Gastrocnemius medialis (tissue), 4 donors: ENCODE measurements at regions of chr22 and their contacts with region 1.

Region 1: GRCh38 chr22:21031971-21032867 is at the start of gene SLC7A4:
- DNase-seq: peak in 1 of 2 donors; percentile 35
- ATAC-seq: peak; percentile 15
- H3K4me3 ChIP-seq: peak within 1 kb of the TSS in 3 of 4 donors; percentile 24 to 44 (median 28)
- H3K27ac ChIP-seq: no peak within 1 kb of the TSS
- H3K4me1 ChIP-seq: peaks cover 7 to 14% of the 10 kb centered on the region in 2 donors
- H3K27me3 ChIP-seq: peaks cover 17 to 20% (median 19%) of the 10 kb centered on the region in 3 donors
- CTCF ChIP-seq: no peak
- POLR2A ChIP-seq: peak in 1 of 2 donors; percentile 25
- total RNA-seq, gene SLC7A4: not detected

Region 2: DNA sequence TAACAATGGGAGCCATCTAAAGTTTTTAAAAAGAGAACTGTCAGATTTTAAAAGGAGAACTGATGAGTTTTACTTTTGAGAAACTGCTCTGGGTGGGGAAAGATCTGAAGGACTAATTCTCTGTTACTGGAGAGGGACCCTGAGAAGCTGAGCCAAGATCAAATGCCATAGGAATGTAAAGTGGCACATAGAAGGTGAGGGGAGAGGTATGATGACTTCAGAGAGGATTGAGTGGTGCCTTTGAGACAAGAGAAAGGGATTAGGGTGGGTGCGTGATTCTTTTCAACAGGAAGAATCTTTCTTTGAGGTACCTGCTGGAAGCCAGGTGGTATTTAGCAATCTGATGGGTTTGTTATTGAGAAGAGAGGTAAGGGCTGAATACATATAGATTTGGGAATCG is 106.0 kb before region 1 on chr22:
- in situ Hi-C with region 1: no loop called
- intact Hi-C with region 1: no loop called
- DNase-seq: no peak
- ATAC-seq: no peak
- H3K4me3 ChIP-seq: no peak overlapping the region
- H3K27ac ChIP-seq: no peak overlapping the region
- H3K4me1 ChIP-seq: peaks cover 17 to 29% of the 10 kb centered on the region in 2 donors
- H3K27me3 ChIP-seq: no peaks in the 10 kb centered on the region
- CTCF ChIP-seq: no peak
- POLR2A ChIP-seq: no peak

Region 3: GRCh38 chr22:20946080-20946986 is 85.9 kb before region 1 on chr22:
- in situ Hi-C with region 1: no loop called
- intact Hi-C with region 1: no loop called
- DNase-seq: no peak
- ATAC-seq: no peak
- H3K4me3 ChIP-seq: no peak overlapping the region
- H3K27ac ChIP-seq: peak overlapping the region in 2 of 4 donors; percentile 6 to 53
- H3K4me1 ChIP-seq: peaks cover 33 to 43% of the 10 kb centered on the region in 2 donors
- H3K27me3 ChIP-seq: no peaks in the 10 kb centered on the region
- CTCF ChIP-seq: no peak
- POLR2A ChIP-seq: no peak

Region 4: DNA sequence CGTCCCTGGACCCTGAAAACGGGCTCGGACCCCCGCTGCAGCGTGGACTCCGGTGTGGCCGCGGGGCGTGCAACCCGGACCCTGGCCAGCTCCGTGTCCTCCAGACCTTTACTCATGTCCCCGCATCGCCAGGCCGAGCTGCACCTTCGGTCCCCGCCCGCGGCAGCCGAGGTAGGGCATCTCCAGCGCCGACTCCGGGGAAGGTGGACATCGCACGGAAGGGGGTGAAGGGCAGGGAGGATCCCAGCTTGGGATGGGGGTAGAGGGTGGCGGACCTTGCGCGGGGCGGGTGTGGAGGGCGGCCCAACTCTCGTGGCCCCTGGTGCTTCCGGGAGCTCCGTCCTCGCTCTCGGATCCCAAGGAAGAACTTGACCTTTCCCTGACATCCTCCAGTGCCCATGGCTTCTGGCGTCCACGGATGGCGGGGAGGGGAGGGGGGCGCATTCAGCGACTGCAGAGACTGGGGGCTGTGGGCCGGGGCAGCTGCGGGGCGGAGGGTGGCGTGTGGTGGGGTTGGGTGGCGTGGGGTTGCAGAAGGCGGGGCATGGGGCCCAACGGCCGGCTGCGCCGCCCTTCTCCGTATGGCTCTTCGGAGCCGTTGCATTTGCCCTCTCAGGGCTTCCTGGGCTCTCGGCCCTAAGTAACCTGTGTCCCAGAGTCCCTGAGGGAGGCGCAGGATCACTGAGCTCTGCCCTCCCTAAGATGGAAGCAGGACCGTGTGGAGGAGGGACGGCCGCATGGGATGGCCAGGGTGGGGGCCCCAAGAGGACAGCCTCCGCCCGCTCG is 74.7 kb before region 1 on chr22:
- in situ Hi-C with region 1: no loop called
- intact Hi-C with region 1: no loop called
- DNase-seq: no peak
- ATAC-seq: peak in 1 of 2 donors; percentile 9
- H3K4me3 ChIP-seq: peak overlapping the region; percentile 58 to 77 (median 66)
- H3K27ac ChIP-seq: peak overlapping the region in 1 of 4 donors; percentile 6
- H3K4me1 ChIP-seq: peaks cover 45% of the 10 kb centered on the region in 2 donors
- H3K27me3 ChIP-seq: no peaks in the 10 kb centered on the region
- CTCF ChIP-seq: no peak
- POLR2A ChIP-seq: no peak

Region 5: DNA sequence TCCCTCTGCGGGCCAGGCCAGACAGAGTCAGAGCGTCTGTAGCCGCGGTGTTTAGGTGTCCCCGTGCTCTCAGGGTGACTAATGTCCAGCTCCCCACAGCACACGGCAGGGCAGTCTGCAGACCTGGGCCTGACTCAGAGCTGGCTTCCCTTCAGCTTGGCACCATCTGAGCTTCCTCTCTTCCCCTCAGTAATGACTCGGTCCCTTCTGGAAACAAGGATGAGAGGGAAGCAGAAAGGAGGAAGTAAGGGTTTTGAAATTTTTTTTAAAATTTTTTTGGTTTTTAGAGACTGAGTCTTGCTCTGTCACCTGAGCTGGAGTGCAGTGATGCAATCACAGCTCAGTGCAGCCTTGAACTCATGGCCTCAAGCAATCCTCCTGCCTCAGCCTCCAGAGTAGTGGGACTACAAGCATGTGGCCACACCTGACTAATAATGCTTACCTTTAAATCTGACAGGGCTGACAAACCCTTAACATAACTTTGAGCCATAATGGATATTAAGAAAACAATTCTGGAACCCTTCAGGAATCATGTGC is 42.0 kb after region 1 on chr22:
- in situ Hi-C with region 1: no loop called
- intact Hi-C with region 1: loop called (anchors 5 kb)
- DNase-seq: no peak
- ATAC-seq: no peak
- H3K4me3 ChIP-seq: no peak overlapping the region
- H3K27ac ChIP-seq: no peak overlapping the region
- H3K4me1 ChIP-seq: no peaks in the 10 kb centered on the region
- H3K27me3 ChIP-seq: no peaks in the 10 kb centered on the region
- CTCF ChIP-seq: no peak
- POLR2A ChIP-seq: no peak

Region 6: DNA sequence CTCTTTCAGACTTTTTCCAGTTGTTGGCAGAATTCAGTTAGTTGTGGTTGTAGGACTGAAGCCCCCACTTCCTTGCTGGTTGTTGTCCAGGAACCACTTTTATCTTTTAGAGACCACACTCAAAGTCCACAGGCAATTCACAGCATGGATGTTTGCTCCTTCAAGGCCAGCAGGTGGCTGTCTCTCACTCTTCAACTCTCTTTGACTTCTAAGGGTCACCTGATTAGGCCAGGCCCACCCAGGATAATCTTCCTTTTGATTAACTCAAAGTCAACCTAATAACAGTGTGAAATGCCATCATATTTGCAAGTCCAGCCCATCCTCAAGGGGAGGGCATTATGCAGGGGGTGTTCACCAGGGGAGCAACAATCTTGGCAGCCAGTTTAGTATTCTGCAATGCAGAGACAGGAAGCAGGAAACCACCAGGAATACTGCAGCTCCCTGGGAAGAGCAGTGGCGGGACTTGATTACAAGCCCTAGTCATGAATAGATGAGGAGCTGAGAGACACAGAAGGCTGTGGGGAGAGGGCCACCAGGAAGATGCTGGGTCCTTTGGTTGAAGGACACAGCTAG is 66.0 kb after region 1 on chr22:
- in situ Hi-C with region 1: loop called in 1 of 4 experiments (anchors 10 kb)
- intact Hi-C with region 1: no loop called
- DNase-seq: no peak
- ATAC-seq: no peak
- H3K4me3 ChIP-seq: no peak overlapping the region
- H3K27ac ChIP-seq: no peak overlapping the region
- H3K4me1 ChIP-seq: no peaks in the 10 kb centered on the region
- H3K27me3 ChIP-seq: peaks cover 0 to 6% (median 4%) of the 10 kb centered on the region in 3 donors
- CTCF ChIP-seq: no peak
- POLR2A ChIP-seq: no peak